ENCODE measurements at regions of chr11 and their contacts with region 1.

Region 1: DNA sequence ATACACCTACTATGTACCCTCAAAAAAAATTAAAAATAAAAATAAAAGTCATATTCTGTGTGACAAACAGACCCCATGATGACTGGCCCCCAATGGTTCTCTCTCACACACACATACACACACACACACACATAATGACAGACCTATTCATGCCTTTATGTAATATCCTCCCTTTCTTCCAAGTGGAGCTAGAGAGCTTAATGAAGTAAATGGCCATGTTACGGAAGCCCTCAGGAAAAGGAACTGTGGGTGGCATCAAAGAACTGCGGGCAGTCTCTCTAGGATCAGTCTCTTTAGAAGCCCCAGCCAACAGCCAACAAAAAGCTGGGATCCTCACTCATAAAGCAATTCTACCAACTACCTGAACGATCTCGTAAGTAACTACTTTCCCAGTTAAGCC is 125.5 kb downstream of the SIK3 start:
- DNase-seq: no peak
- H3K4me3 ChIP-seq: no peak overlapping the region
- H3K27ac ChIP-seq: no peak overlapping the region
- H3K4me1 ChIP-seq: peaks cover 0 to 7% (median 3%) of the 10 kb centered on the region in 4 experiments; a peak in 4 of 7 replicates
- H3K27me3 ChIP-seq: no peaks in the 10 kb centered on the region
- CTCF ChIP-seq: no peak
- EP300 ChIP-seq: no peak
- POLR2A ChIP-seq: no peak
- RAD21 ChIP-seq: 0 out of 4 replicates have a peak, but pooled peaks have one; percentile 13 to 23

Region 2: DNA sequence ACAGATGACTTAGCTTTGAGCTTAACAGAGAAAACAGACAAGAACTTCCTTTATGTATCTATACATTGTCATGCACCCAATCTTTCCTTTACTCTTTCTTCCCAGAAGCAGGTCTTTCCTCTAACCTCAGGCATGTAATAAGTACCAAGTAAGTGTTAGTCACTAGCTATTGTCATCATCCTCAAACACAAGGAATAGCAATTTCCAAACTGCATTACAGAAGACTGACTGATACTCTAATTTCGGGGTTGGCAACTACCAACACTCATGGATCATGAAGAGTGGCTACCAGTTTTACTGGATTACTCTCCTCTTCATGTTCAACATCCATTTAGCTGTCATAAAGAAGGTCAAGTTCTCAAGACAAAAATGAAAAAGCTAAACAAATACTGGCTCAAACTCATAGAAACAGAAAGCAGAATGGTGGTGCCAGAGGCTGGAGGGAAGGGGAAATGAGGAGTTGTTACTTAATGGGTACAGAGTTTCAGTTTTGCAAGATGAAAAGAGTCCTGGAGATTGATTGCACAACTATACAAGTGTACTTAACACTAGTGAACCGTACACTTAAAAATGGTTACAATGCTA is 13.9 kb after region 1 on chr11:
- CTCF ChIA-PET with region 1: interaction called, 11 read pairs
- POLR2A ChIA-PET with region 1: interaction called, 7 read pairs
- DNase-seq: no peak
- H3K4me3 ChIP-seq: no peak overlapping the region
- H3K27ac ChIP-seq: no peak overlapping the region
- H3K4me1 ChIP-seq: peaks cover 0 to 11% (median 5%) of the 10 kb centered on the region in 4 experiments; a peak in 5 of 7 replicates
- H3K27me3 ChIP-seq: no peaks in the 10 kb centered on the region
- CTCF ChIP-seq: no peak
- EP300 ChIP-seq: no peak
- POLR2A ChIP-seq: no peak
- RAD21 ChIP-seq: no peak

Region 3: GRCh38 chr11:117378976-117379865 is 406.5 kb after region 1 on chr11:
- CTCF ChIA-PET with region 1: no interaction called
- POLR2A ChIA-PET with region 1: no interaction called
- DNase-seq: no peak
- H3K4me3 ChIP-seq: no peak overlapping the region
- H3K27ac ChIP-seq: no peak overlapping the region
- H3K4me1 ChIP-seq: peaks cover 0 to 3% (median 0%) of the 10 kb centered on the region in 4 experiments; a peak in 3 of 7 replicates
- H3K27me3 ChIP-seq: no peaks in the 10 kb centered on the region
- CTCF ChIP-seq: no peak
- EP300 ChIP-seq: no peak
- POLR2A ChIP-seq: no peak
- RAD21 ChIP-seq: no peak

Measured in H1 (cell line).